Mammary epithelial cell (primary cell): ENCODE measurements at regions of chr13 and their contacts with region 1.

Region 1: DNA sequence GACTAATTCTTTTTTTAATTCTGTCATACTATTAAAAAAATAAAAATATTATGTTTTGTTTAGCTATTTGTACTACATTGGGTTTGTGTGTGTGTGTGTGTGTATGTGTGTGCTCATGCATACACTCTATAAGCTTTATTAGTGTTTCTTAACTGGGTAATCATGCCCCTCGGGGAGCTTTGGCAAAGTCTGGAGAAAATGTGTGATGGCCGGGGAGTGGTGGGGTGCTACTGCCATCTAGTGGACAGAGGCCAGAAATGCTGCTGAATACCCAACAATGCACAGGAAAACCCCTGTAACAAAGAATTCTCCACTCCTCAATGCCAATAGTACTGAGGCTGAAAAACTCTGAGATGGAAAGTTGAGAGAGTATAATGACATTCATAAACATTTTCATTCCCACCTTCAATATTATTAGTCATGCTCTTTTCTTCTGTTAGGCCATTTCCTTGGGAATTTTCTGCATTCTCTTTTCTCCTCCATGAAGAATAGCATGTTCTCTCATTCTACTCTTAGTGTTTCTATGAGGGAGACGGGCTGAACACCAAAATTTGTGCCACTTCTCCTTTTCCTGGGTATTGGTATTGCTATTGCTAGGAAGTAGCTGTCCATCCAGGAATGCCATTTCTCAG is 157.3 kb downstream of the DNAJC3 start:
- DNase-seq: peak; percentile 52
- H3K4me3 ChIP-seq: no peak overlapping the region
- H3K27ac ChIP-seq: no peak overlapping the region
- H3K4me1 ChIP-seq: peaks cover 10% of the 10 kb centered on the region
- H3K27me3 ChIP-seq: no peaks in the 10 kb centered on the region
- CTCF ChIP-seq: peak; percentile 89 to 97

Region 2: DNA sequence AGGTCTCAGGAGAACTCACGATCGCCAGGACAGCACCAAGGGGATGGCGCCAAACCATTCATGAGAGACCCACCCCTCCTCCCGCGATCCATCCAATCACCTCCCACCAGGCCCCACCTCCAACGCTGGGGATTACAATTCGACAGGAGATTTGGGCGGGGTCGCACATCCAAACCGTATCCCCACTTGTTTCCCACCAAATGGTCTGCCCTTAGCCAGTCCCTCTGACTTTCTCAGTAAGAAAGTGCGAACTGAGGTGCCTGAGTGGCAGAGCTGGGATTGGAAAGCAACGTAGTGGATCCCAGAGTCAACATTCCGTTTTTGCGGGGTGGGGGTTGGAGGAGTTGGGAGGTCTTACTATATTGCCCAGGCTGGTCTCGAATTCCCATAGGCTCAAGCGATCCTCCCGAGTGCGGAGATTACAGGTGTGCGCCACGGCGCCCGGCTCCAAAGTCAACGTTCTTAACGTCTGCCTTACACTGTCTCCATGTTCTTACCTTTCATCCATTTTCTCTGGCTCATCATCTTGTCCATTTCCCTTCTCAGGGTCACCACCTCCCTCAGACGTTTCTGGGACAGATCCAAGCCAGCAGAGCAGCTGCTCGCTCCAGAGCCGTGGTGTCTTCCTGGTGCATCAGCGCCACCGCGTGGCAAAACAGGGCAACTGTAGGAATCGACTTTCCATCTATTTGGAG is 430.3 kb before region 1 on chr13:
- CTCF ChIA-PET with region 1: no interaction called
- dilution Hi-C with region 1: no loop called
- in situ Hi-C with region 1: no loop called
- intact Hi-C with region 1: loop called (anchors 5 kb)
- DNase-seq: peak; percentile 55
- H3K4me3 ChIP-seq: peak overlapping the region in 2 of 3 experiments; percentile 12 to 41
- H3K27ac ChIP-seq: no peak overlapping the region
- H3K4me1 ChIP-seq: peaks cover 4% of the 10 kb centered on the region
- H3K27me3 ChIP-seq: no peaks in the 10 kb centered on the region
- CTCF ChIP-seq: peak; percentile 90 to 93

Region 3: DNA sequence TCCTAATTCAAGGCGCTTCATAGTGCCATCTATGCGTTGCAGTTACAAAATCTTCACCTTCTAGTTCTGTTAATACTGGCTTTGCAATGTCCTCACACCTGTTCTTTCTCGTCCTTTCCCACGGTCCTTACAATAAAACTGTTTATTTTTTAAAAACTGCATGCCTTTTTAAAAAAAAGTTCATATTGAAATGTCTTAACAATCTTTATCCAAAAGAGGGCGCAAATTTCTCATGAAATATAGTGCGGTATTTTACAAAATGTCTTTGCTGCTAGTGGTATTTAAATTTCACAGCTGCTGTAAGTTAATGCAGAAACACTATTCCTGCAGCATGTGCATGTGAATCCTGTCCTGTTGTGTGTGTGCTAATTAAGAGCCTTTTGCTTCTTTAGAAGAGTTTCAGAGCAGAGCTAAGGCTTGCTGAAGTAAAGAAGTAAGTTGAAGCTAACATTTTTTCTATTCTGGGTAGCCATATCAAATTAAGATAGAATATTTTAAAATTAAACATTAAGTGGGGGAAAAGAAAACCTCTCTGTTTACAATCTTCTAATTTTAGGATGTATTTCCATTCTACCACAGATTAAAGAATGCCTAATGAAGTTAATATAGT is 297.5 kb before region 1 on chr13:
- CTCF ChIA-PET with region 1: interaction called, 7 read pairs
- dilution Hi-C with region 1: no loop called
- in situ Hi-C with region 1: no loop called
- intact Hi-C with region 1: loop called (anchors 2 kb)
- DNase-seq: peak; percentile 12
- H3K4me3 ChIP-seq: no peak overlapping the region
- H3K27ac ChIP-seq: no peak overlapping the region
- H3K4me1 ChIP-seq: peaks cover 18% of the 10 kb centered on the region
- H3K27me3 ChIP-seq: no peaks in the 10 kb centered on the region
- CTCF ChIP-seq: peak; percentile 41 to 47

Region 4: GRCh38 chr13:95624020-95624419 is 210.2 kb before region 1 on chr13:
- CTCF ChIA-PET with region 1: interaction called, 4 read pairs
- dilution Hi-C with region 1: no loop called
- in situ Hi-C with region 1: loop called in 1 of 2 experiments (anchors 25 kb)
- intact Hi-C with region 1: loop called (anchors 1 kb)
- DNase-seq: peak; percentile 40
- H3K4me3 ChIP-seq: no peak overlapping the region
- H3K27ac ChIP-seq: no peak overlapping the region
- H3K4me1 ChIP-seq: no peaks in the 10 kb centered on the region
- H3K27me3 ChIP-seq: no peaks in the 10 kb centered on the region
- CTCF ChIP-seq: peak; percentile 41 to 69

Region 5: GRCh38 chr13:95660981-95661581 is 173.2 kb before region 1 on chr13:
- CTCF ChIA-PET with region 1: interaction called, 6 read pairs
- dilution Hi-C with region 1: no loop called
- in situ Hi-C with region 1: no loop called
- intact Hi-C with region 1: loop called (anchors 1 kb)
- DNase-seq: peak; percentile 24
- H3K4me3 ChIP-seq: no peak overlapping the region
- H3K27ac ChIP-seq: no peak overlapping the region
- H3K4me1 ChIP-seq: no peaks in the 10 kb centered on the region
- H3K27me3 ChIP-seq: no peaks in the 10 kb centered on the region
- CTCF ChIP-seq: peak; percentile 72 to 76

Region 6: GRCh38 chr13:95948656-95949055 is 114.4 kb after region 1 on chr13:
- CTCF ChIA-PET with region 1: no interaction called
- dilution Hi-C with region 1: no loop called
- in situ Hi-C with region 1: no loop called
- intact Hi-C with region 1: no loop called
- DNase-seq: peak; percentile 39
- H3K4me3 ChIP-seq: no peak overlapping the region
- H3K27ac ChIP-seq: no peak overlapping the region
- H3K4me1 ChIP-seq: no peaks in the 10 kb centered on the region
- H3K27me3 ChIP-seq: no peaks in the 10 kb centered on the region
- CTCF ChIP-seq: no peak

Region 7: DNA sequence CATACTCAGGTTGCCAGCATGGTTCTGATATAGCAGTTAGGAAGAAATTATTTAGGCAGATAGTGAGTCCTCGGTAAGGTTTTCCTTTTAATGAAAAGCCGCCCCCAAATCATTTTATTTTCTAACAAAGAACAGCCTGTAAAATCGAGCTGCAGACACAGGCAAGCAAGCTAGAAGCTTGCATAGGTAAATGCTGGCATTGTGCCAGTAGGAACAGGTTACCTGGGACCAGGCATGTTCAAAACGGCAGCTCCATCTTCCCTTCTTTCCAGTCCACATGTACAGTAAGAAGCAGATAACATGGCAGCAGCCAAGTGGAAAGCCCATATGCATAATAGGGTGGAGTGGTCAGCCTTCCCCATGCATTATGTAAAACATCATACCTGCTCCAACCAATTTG is 147.9 kb after region 1 on chr13:
- CTCF ChIA-PET with region 1: no interaction called
- dilution Hi-C with region 1: no loop called
- in situ Hi-C with region 1: no loop called
- intact Hi-C with region 1: loop called (anchors 1 kb)
- DNase-seq: no peak
- H3K4me3 ChIP-seq: no peak overlapping the region
- H3K27ac ChIP-seq: no peak overlapping the region
- H3K4me1 ChIP-seq: no peaks in the 10 kb centered on the region
- H3K27me3 ChIP-seq: no peaks in the 10 kb centered on the region
- CTCF ChIP-seq: no peak